Activated CD4-positive, alpha-beta T cell treated with anti-CD3 and anti-CD28 coated beads, Interleukin-2, amount 10 ng/mL, durations not matched to agents 24 days and 14 days (primary cell): ENCODE measurements at regions of chr22 and their contacts with region 1.

Region 1: GRCh38 chr22:22463855-22464540 is 44.5 kb downstream of the ZNF280B start:
- DNase-seq: peak; percentile 88
- H3K4me3 Mint-ChIP-seq: no peak overlapping the region
- H3K27ac Mint-ChIP-seq: no peak overlapping the region
- H3K4me1 Mint-ChIP-seq: no peaks in the 10 kb centered on the region
- H3K27me3 Mint-ChIP-seq: peaks cover 23% of the 10 kb centered on the region

Region 2: DNA sequence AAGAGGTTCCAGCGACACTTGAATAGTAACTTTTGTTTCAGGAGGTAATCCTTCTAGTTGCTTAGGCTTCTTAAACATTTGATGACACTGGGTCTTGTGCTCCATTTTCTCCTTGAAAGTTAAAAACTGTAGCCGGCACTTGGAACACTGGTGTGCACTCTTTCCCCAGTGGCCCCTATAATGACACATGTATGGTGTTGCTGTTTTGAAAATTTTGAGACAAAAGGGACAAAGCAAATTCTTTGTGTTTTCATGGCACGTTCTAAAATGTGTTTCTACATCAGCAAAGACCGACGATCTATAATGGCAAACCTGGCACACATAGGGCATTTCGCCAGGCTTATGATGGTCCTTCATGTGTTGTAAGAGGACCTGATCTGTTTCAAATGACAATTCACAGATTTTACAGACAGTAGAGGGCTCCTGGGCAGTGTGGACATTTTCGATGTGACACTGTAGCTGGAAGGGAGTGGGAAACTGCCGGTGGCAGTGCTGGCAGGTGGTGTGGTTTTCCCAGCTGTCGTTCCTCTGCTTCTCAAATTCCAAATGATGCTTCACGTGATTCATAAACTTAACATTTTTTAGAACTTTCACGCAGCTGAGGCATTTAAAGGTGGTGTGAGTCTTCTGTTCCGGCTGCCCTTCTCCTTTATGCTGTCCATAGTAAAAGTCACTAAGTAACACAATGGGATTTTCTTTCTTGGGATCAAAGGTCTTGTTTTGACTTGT is 24.0 kb after region 1 on chr22:
- intact Hi-C with region 1: no loop called
- DNase-seq: no peak
- H3K4me3 Mint-ChIP-seq: no peak overlapping the region
- H3K27ac Mint-ChIP-seq: no peak overlapping the region
- H3K4me1 Mint-ChIP-seq: no peaks in the 10 kb centered on the region
- H3K27me3 Mint-ChIP-seq: no peaks in the 10 kb centered on the region

Region 3: GRCh38 chr22:22576244-22576988 is 112.4 kb after region 1 on chr22:
- intact Hi-C with region 1: loop called (anchors 5 kb)
- DNase-seq: peak; percentile 75
- H3K4me3 Mint-ChIP-seq: no peak overlapping the region
- H3K27ac Mint-ChIP-seq: no peak overlapping the region
- H3K4me1 Mint-ChIP-seq: no peaks in the 10 kb centered on the region
- H3K27me3 Mint-ChIP-seq: peaks cover 21% of the 10 kb centered on the region

Region 4: GRCh38 chr22:22692707-22693530 is 228.9 kb after region 1 on chr22:
- intact Hi-C with region 1: loop called (anchors 10 kb)
- DNase-seq: peak; percentile 88
- H3K4me3 Mint-ChIP-seq: no peak overlapping the region
- H3K27ac Mint-ChIP-seq: no peak overlapping the region
- H3K4me1 Mint-ChIP-seq: no peaks in the 10 kb centered on the region
- H3K27me3 Mint-ChIP-seq: no peaks in the 10 kb centered on the region